Right lobe of liver (tissue), 6 donors: ENCODE measurements at regions of chr19 and their contacts with region 1.

Region 1: GRCh38 chr19:17579661-17580244 is 24.3 kb downstream of the COLGALT1 start:
- DNase-seq: peak in 1 of 3 donors; percentile 52
- ATAC-seq: peak; percentile 62 to 69 (median 66)
- H3K4me3 ChIP-seq: no peak overlapping the region
- H3K27ac ChIP-seq: no peak overlapping the region
- H3K4me1 ChIP-seq: no peaks in the 10 kb centered on the region
- H3K27me3 ChIP-seq: no peaks in the 10 kb centered on the region
- CTCF ChIP-seq: no peak
- POLR2A ChIP-seq: no peak

Region 2: GRCh38 chr19:17496337-17496997 is 83.3 kb before region 1 on chr19:
- intact Hi-C with region 1: loop called in 1 of 2 experiments (anchors 10 kb)
- DNase-seq: peak; percentile 71 to 77 (median 73)
- ATAC-seq: peak; percentile 91 to 94 (median 94)
- H3K4me3 ChIP-seq: no peak overlapping the region
- H3K27ac ChIP-seq: no peak overlapping the region
- H3K4me1 ChIP-seq: no peaks in the 10 kb centered on the region
- H3K27me3 ChIP-seq: no peaks in the 10 kb centered on the region
- CTCF ChIP-seq: peak; percentile 79 to 95 (median 88)
- POLR2A ChIP-seq: no peak